AG04449 (cell line): ENCODE measurements at regions of chr11 and their contacts with region 1.

Region 1: DNA sequence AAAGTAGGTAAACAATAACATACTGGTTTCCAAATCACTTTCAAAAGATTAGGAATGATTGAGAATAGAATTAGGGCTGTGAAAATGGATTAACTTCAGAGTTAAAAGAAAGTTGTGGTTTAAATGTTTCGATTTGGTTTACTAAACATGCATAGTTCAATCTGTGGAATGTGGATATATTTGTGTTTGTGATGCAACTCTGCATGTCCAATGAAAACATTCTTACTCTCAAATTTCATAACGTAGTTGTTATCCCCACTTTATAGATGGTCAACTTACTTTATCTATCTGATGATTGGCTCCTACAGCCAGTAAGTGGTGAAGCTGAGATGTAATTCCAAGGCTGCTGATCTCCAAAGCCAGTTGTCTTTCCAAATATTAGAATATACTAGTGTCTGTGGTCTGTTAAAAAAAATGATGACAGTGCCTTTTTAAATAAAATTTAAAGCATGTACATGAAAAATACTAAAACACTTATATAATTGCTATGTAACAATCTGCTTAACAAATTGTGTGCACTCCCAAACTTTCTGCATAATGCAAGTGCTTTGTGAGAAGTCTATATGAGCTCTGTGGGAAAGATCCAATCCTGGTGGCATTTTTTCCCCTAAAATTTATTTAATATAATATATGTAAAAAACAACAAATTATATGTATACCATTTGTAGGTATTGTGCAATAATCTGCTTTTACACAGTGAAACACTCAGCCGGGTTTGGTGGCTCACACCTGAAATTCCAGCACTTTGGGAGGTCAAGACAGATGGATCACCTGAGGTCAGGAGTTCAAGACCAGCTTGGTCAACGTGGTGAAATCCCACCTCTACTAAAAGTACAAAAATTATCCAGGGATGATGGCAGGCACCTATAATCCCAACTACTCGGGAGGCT is 9.7 kb upstream of the SIK3 start:
- DNase-seq: no peak
- H3K4me3 ChIP-seq: no peak overlapping the region
- CTCF ChIP-seq: no peak

Region 2: DNA sequence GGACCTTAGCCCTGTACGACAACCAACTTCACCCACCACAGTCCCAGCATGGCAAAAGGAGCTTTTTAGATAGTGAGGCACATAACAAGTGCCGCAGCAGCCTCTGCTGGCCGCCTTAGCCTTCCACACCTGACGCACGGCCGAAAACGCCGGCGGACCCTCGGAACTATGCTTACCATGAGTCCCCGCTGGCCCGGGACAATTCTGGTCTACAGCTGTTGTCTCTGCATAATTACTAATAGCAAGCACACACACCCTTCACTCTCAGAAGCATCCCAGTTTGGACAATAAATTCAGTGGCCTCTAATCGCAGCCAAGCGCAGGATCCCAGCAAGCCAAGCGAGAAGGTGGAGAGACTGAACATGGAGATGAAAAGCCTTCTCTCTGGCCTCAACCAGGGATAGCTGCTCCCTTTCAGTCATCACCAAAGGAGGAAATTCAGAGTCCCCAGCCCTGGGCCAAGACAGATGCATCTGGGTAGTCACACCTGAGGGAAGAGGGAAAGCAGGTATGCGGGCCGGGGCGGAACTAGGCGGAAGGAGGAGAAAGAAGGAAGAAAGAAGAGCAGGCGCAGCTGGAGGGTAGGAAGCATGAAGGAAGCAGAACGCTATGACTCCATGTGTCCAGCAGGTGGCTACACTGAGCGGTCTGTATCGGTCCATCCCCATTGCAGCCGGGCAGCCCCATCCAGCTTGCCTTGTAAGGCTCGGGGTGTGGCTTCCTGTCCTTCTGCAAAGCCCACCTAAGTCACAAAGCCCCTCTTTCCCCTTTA is 375.5 kb before region 1 on chr11:
- CTCF ChIA-PET with region 1: interaction called, 76 read pairs
- POLR2A ChIA-PET with region 1: no interaction called
- DNase-seq: no peak
- H3K4me3 ChIP-seq: no peak overlapping the region
- CTCF ChIP-seq: peak; percentile 95

Region 3: DNA sequence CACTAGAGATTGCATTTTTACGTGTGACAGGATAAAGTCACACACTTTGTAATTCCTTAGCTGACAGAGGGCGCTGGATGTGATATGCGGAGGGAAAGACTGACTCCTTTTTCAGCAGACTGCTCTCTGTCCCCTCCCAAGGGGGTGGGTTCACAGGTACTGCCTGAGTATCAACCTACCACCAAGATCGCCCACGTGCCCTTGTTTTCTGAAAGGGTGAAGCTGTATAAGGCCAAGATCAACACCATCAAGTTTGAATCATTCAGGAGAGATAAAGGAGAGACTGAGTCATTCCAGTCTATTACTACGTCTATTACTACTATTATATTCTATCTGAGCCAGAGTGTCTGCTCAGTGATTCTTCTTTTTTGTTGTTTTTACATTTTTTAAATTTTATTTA is 365.8 kb before region 1 on chr11:
- CTCF ChIA-PET with region 1: interaction called, 18 read pairs
- POLR2A ChIA-PET with region 1: no interaction called
- DNase-seq: no peak
- H3K4me3 ChIP-seq: no peak overlapping the region
- CTCF ChIP-seq: no peak

Region 4: DNA sequence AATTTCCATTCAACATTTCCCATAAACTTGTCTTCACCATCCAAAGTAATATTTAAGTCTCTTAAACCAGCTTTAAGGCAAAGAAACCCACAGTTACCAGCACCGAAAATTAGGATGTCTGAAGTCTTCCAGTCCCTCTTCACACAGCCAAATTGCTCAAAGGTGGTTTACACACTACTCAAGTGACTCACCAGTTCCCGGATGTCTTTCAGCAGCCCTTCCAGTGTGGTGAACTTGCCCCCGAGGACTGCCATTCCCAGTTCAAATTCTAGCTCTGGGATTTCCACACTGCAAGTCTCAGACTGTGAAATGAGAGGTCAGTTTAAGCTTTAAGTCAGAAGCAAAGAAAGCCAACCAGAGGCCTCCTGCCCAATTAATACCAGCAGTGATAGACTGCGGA is 325.2 kb before region 1 on chr11:
- CTCF ChIA-PET with region 1: interaction called, 472 read pairs
- POLR2A ChIA-PET with region 1: no interaction called
- DNase-seq: no peak
- H3K4me3 ChIP-seq: no peak overlapping the region
- CTCF ChIP-seq: no peak

Region 5: DNA sequence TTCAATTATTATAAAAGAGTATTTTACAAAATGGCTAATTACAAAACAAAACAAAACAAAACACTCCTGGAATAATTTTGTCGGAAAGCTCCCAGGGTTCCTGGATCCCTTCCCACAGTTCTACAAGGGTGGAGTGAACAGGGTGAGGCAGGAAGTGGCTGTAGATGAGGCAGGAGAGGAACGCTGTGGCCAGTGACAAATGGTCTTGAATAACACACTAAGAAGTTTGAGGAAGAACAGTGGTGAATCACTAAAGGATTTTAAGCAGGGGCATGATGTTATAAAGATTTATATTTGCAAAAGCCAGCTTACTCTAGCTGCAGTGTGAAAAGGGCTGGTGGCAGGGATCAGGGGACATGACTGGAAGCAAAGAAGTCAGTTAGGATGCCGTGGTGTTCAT is 236.7 kb before region 1 on chr11:
- CTCF ChIA-PET with region 1: interaction called, 14 read pairs
- POLR2A ChIA-PET with region 1: no interaction called
- DNase-seq: no peak
- H3K4me3 ChIP-seq: no peak overlapping the region
- CTCF ChIP-seq: no peak

Region 6: GRCh38 chr11:116879800-116880625 is 227.9 kb before region 1 on chr11:
- CTCF ChIA-PET with region 1: interaction called, 105 read pairs
- POLR2A ChIA-PET with region 1: no interaction called
- DNase-seq: no peak
- H3K4me3 ChIP-seq: no peak overlapping the region
- CTCF ChIP-seq: peak; percentile 76

Region 7: GRCh38 chr11:117121176-117121575 is 13.2 kb after region 1 on chr11:
- CTCF ChIA-PET with region 1: interaction called, 35 read pairs
- POLR2A ChIA-PET with region 1: no interaction called
- DNase-seq: no peak
- H3K4me3 ChIP-seq: no peak overlapping the region
- CTCF ChIP-seq: no peak

Region 8: GRCh38 chr11:117259417-117259816 is 151.5 kb after region 1 on chr11:
- CTCF ChIA-PET with region 1: no interaction called
- POLR2A ChIA-PET with region 1: no interaction called
- DNase-seq: no peak
- H3K4me3 ChIP-seq: no peak overlapping the region
- CTCF ChIP-seq: no peak